Right cardiac atrium (tissue), 5 donors: ENCODE measurements at regions of chr20 and their contacts with region 1.

Region 1: GRCh38 chr20:62768481-62769287 is 27.6 kb upstream of the MRGBP start:
- DNase-seq: peak; percentile 14 to 47 (median 40)
- ATAC-seq: peak in 1 of 2 donors; percentile 12
- H3K4me3 ChIP-seq: no peak overlapping the region
- H3K27ac ChIP-seq: no peak overlapping the region
- H3K4me1 ChIP-seq: no peaks in the 10 kb centered on the region
- H3K27me3 ChIP-seq: no peaks in the 10 kb centered on the region

Region 2: GRCh38 chr20:62704301-62704948 is 64.3 kb before region 1 on chr20:
- intact Hi-C with region 1: loop called in 1 of 4 experiments (anchors 10 kb)
- DNase-seq: peak; percentile 88 to 95 (median 93)
- ATAC-seq: peak; percentile 66 to 86
- H3K4me3 ChIP-seq: no peak overlapping the region
- H3K27ac ChIP-seq: no peak overlapping the region
- H3K4me1 ChIP-seq: peaks cover 6% of the 10 kb centered on the region
- H3K27me3 ChIP-seq: no peaks in the 10 kb centered on the region